Activated CD4-positive, alpha-beta T cell treated with anti-CD3 and anti-CD28 coated beads for 36 hours (primary cell): ENCODE measurements at regions of chr4 and their contacts with region 1.

Region 1: DNA sequence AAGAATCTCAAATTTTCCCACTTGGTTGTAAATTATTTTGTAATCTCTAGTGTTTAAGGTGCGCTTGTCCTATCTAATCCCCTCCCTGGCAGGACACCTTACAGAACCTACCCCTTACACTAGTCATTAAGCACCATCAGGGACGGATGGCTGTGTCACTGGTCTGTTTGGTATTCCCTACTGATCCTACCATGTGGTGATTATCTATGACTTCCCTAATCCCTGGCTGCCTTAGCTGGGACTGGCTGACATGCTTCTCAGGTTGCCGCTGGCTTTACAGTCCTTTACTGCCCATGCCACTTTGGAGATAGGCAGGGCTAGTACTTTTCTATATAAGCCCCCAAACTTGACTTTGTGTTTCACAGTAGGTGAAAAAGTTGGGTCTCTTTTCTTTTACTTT is 58.6 kb downstream of the ELOVL6 start:
- DNase-seq: no peak
- ATAC-seq: no peak
- H3K4me3 Mint-ChIP-seq: no peak overlapping the region
- H3K27ac Mint-ChIP-seq: no peak overlapping the region
- H3K4me1 Mint-ChIP-seq: no peaks in the 10 kb centered on the region
- H3K27me3 Mint-ChIP-seq: no peaks in the 10 kb centered on the region

Region 2: GRCh38 chr4:109499513-109499912 is 640.3 kb before region 1 on chr4:
- CTCF ChIA-PET with region 1: no interaction called
- POLR2A ChIA-PET with region 1: no interaction called
- intact Hi-C with region 1: no loop called
- DNase-seq: no peak
- ATAC-seq: peak; percentile 49
- H3K4me3 Mint-ChIP-seq: no peak overlapping the region
- H3K27ac Mint-ChIP-seq: no peak overlapping the region
- H3K4me1 Mint-ChIP-seq: peaks cover 2% of the 10 kb centered on the region
- H3K27me3 Mint-ChIP-seq: no peaks in the 10 kb centered on the region

Region 3: DNA sequence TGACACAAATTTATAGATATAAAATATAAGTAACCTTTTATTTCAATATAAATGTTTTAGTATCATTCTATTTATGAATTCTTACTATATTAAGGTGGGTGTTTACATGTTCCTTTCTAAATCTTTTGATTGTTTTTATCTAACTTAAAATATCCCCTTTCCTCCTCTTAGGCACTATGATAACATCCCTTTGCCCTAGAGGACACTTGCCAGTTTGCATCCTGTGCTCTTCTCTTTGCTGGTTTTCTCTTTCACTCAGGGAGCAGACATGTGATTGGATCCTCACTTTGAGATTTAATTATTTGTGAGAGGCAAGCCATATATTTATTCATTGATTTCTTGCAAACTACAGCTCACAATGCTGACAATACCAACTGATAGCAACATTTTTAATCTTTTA is 275.7 kb before region 1 on chr4:
- CTCF ChIA-PET with region 1: no interaction called
- POLR2A ChIA-PET with region 1: no interaction called
- intact Hi-C with region 1: loop called in 1 of 2 experiments (anchors 5 kb)
- DNase-seq: no peak
- ATAC-seq: no peak
- H3K4me3 Mint-ChIP-seq: no peak overlapping the region
- H3K27ac Mint-ChIP-seq: no peak overlapping the region
- H3K4me1 Mint-ChIP-seq: no peaks in the 10 kb centered on the region
- H3K27me3 Mint-ChIP-seq: no peaks in the 10 kb centered on the region

Region 4: GRCh38 chr4:109879118-109879517 is 260.7 kb before region 1 on chr4:
- CTCF ChIA-PET with region 1: no interaction called
- POLR2A ChIA-PET with region 1: no interaction called
- intact Hi-C with region 1: no loop called
- DNase-seq: no peak
- ATAC-seq: no peak
- H3K4me3 Mint-ChIP-seq: no peak overlapping the region
- H3K27ac Mint-ChIP-seq: no peak overlapping the region
- H3K4me1 Mint-ChIP-seq: no peaks in the 10 kb centered on the region
- H3K27me3 Mint-ChIP-seq: peaks cover 4% of the 10 kb centered on the region